ENCODE measurements at regions of chr20 and their contacts with region 1.

Region 1: DNA sequence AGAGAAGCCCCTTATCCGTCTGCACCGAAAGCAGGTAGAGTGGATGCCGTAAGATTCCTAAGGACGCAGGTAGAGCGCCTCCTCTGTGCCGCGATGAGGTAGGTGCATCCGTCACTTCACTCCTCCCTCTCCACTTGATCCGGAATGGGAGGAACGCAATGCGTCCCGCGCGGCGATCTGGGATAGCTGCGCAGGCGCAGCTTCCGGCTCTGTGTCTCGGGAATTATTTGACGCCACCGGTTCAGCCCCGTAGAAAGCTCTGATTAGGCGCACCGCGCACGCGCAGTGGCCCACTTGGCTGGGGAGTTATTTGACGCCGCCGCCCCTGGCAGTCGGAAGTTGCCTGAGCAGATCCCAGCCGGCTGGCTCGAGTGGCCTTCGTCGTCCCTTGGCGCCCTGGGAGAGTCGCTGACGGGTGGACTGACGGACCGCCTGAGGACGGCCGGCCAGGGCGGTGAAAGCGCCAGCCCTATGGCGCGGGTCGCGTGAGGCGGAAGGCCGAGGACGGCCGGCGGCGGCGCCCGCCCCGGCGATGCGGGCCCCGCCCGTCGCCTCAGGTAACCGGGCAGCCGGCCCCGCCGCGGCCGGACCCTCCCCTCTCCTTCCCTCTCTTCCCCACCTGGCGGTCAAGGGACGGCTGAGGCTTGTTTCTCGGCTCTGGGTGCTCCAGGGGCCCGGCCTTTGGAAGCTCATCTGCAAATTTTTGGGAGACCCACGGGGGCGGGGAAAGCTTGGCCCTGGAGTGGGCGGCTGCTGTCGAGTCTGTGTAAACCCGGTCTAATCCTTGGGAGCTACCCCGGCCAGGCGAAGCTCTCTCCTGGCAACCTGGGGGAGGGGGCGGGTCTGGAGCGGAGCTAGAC is at the start of gene RALGAPB:
- DNase-seq: peak; percentile 100
- H3K27ac ChIP-seq: peak within 1 kb of the TSS; percentile 84
- CTCF ChIP-seq: peak; percentile 78

Region 2: DNA sequence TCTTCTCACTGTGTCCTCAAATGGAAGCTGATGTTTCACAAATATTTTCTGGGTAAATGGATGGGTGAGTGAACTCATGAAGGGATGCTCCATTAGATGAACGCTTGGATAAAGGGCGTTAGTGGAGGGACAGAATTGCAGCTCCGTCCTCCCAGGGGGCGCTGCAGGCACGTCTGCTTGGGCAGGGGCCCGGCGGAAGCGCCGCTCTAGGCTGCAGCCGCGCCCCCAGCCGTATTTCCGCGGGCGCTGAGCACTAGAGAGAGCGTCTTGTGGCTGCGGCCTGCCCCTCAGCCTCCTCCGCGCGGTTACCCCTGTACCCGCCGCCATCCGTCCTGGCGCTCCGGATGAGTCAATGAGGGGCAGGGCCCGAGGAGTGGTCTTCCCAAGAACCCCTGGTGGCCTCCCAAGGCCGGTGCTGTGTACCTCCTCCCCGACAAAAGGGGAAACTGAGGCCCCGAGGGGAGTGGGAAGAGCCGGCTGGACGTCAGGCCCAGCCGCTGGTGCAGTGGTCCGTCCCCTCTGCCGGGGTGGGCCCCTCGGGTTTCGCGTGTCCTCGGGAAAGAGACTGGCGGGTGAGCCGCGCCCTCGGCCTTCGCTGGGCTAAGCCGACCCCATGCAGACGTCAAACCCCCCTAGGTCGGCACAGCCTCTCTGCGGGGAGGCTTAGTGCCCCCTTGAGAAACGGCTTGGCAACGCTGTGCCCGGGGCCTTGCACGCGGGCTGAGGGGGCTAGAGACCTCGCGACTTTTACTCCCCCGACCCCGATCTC is 26.1 kb before region 1 on chr20:
- CTCF ChIA-PET with region 1: interaction called, 17 read pairs
- POLR2A ChIA-PET with region 1: interaction called, 4 read pairs
- DNase-seq: peak; percentile 94
- H3K27ac ChIP-seq: peak overlapping the region; percentile 67
- CTCF ChIP-seq: peak; percentile 99

Region 3: GRCh38 chr20:38453941-38454340 is 18.8 kb before region 1 on chr20:
- CTCF ChIA-PET with region 1: interaction called, 8 read pairs
- POLR2A ChIA-PET with region 1: interaction called, 14 read pairs
- DNase-seq: no peak
- H3K27ac ChIP-seq: no peak overlapping the region
- CTCF ChIP-seq: no peak

Measured in RWPE1 (cell line).